ENCODE measurements at regions of chr3 and their contacts with region 1.

Region 1: GRCh38 chr3:42443819-42444436 is 33.5 kb upstream of the LYZL4 start:
- DNase-seq: peak; percentile 60 to 94 (median 88)

Region 2: GRCh38 chr3:42118762-42119361 is 325.1 kb before region 1 on chr3:
- intact Hi-C with region 1: loop called (anchors 5 kb)
- DNase-seq: peak in 34 of 42 donors; percentile 23 to 79 (median 52)

Region 3: GRCh38 chr3:42229942-42230688 is 213.8 kb before region 1 on chr3:
- intact Hi-C with region 1: loop called (anchors 5 kb)
- DNase-seq: peak in 18 of 42 donors; percentile 15 to 65 (median 46)

Region 4: GRCh38 chr3:42247576-42248027 is 196.3 kb before region 1 on chr3:
- intact Hi-C with region 1: loop called (anchors 5 kb)
- DNase-seq: peak in 41 of 42 donors; percentile 34 to 85 (median 67)